ENCODE measurements at regions of chrX and their contacts with region 1.

Region 1: GRCh38 chrX:48917139-48918001 is 1.5 kb downstream of the PIM2 start:
- DNase-seq: peak; percentile 96

Region 2: GRCh38 chrX:48945516-48946348 is 28.4 kb after region 1 on chrX:
- intact Hi-C with region 1: no loop called
- DNase-seq: no peak

Region 3: GRCh38 chrX:48972220-48973167 is 55.1 kb after region 1 on chrX:
- intact Hi-C with region 1: loop called in 1 of 2 experiments (anchors 10 kb)
- DNase-seq: no peak

Measured in posterior vena cava (tissue), 2 donors.